Astrocyte of the cerebellum (primary cell): ENCODE measurements at regions of chr13 and their contacts with region 1.

Region 1: DNA sequence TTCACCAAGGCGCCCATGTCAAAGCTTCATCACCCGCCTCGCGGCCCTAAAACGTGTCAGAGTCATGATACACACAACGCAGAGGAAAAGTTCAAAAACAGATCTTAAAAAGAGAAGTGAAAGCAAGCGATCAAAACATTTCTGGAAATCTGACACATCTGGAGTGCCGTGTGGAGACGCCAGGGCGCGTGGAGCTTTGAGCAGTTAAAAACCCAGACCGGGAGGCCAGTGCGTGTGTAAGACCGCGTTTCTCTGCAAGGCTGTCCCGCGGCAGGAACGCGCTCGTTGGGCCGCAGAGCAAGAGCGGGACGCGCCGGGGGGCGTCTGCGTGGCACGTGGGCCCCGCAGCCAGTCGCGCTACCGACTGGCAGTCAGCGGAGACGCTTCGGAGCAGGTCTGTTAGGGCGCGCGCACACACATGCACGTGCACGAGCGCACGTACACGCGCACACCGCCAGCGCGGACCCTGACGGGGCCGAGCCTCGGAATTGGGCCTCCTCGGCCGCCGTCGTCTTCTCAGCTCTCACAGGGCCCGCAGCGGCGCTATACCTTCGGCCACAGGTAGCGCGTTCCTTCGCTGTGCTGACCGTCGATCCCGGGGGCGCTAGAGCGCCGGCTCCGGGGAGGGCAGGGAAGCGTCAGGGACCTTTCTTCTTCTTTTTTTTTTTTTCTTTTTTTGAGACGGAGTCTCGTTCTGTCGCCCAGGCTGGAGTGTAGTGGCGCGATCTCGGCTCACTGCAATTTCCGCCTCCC is 35.8 kb downstream of the RNF6 start:
- DNase-seq: peak; percentile 77
- H3K4me3 ChIP-seq: peak overlapping the region; percentile 55
- CTCF ChIP-seq: peak; percentile 40

Region 2: GRCh38 chr13:26132756-26133155 is 53.5 kb before region 1 on chr13:
- in situ Hi-C with region 1: no loop called
- DNase-seq: no peak
- H3K4me3 ChIP-seq: no peak overlapping the region
- CTCF ChIP-seq: peak; percentile 25

Region 3: GRCh38 chr13:26698392-26699196 is 512.3 kb after region 1 on chr13:
- in situ Hi-C with region 1: loop called (anchors 10 kb)
- DNase-seq: peak; percentile 68
- H3K4me3 ChIP-seq: peak overlapping the region; percentile 6
- CTCF ChIP-seq: peak; percentile 95

Region 4: DNA sequence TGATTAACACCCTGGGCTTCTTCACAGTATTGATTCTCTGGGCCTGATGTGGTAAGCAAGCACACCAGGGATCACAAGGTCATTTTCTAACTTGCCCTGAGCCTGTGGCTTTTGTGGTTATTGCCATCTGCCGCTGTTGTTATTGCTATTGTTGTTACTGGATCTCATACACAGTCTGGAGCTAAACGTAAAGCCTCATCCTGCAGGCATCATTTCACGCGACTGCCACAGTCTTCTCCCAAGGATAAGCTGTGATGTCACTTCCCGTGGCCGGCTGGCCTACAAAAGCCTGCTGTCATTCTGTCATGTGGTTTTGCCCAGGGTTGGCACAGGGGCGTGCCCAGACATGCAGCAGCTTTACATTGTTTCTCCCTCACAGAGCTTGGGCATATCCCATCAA is 728.3 kb after region 1 on chr13:
- in situ Hi-C with region 1: loop called (anchors 25 kb)
- DNase-seq: no peak
- H3K4me3 ChIP-seq: no peak overlapping the region
- CTCF ChIP-seq: no peak